SK-N-SH (cell line): ENCODE measurements at regions of chr3 and their contacts with region 1.

Region 1: GRCh38 chr3:64030741-64031140 is 7.4 kb upstream of the PSMD6 start:
- DNase-seq: peak; percentile 69
- H3K4me3 ChIP-seq: peak overlapping the region; percentile 22 to 49; a peak in 3 of 4 replicates
- H3K27ac ChIP-seq: no peak overlapping the region
- H3K4me1 ChIP-seq: peaks cover 0 to 20% of the 10 kb centered on the region in 2 experiments; a peak in 2 of 4 replicates
- H3K27me3 ChIP-seq: no peaks in the 10 kb centered on the region
- CTCF ChIP-seq: peak; percentile 88
- EP300 ChIP-seq: no peak
- RAD21 ChIP-seq: peak; percentile 98

Region 2: GRCh38 chr3:63746211-63746610 is 284.5 kb before region 1 on chr3:
- CTCF ChIA-PET with region 1: no interaction called
- POLR2A ChIA-PET with region 1: no interaction called
- DNase-seq: no peak
- H3K4me3 ChIP-seq: no peak overlapping the region
- H3K27ac ChIP-seq: no peak overlapping the region
- H3K4me1 ChIP-seq: no peaks in the 10 kb centered on the region
- H3K27me3 ChIP-seq: no peaks in the 10 kb centered on the region
- CTCF ChIP-seq: no peak
- EP300 ChIP-seq: no peak
- RAD21 ChIP-seq: no peak

Region 3: GRCh38 chr3:63863148-63864007 is 167.4 kb before region 1 on chr3 and contains the starts of genes ATXN7 and THOC7:
- CTCF ChIA-PET with region 1: no interaction called
- POLR2A ChIA-PET with region 1: no interaction called
- DNase-seq: peak; percentile 90
- H3K4me3 ChIP-seq: peak within 1 kb of the TSS; percentile 86 to 89
- H3K27ac ChIP-seq: peak within 1 kb of the TSS; percentile 69 to 78
- H3K4me1 ChIP-seq: peaks cover 6% of the 10 kb centered on the region in 2 experiments; a peak in 2 of 4 replicates
- H3K27me3 ChIP-seq: no peaks in the 10 kb centered on the region
- CTCF ChIP-seq: no peak
- EP300 ChIP-seq: peak in 1 of 2 experiments; percentile 56; a peak in 1 of 4 replicates
- RAD21 ChIP-seq: no peak
- polyA plus RNA-seq, gene ATXN7: 6.2 and 8.5 TPM in 2 replicates
- polyA plus RNA-seq, gene THOC7: 35.6 and 35.9 TPM in 2 replicates

Region 4: DNA sequence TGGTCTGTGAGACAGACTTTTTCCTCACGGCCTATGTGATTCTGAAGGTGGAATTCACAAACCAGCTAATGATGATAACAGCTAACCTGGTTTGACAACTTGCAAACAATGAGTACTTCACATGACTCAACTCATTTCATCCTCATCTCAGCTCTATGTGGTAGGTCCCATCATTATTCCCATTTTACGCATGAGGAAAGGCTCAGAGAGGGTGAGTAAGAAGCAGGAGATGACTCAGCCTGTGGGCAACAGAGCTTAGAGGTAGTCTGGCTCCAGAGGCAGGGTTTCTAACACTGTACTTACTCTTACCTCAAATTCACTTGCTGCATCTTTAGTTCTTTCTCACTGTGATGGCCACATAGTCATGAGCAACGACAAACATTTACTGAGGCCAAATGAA is 18.4 kb after region 1 on chr3:
- CTCF ChIA-PET with region 1: interaction called, 10 read pairs
- POLR2A ChIA-PET with region 1: no interaction called
- DNase-seq: no peak
- H3K4me3 ChIP-seq: no peak overlapping the region
- H3K27ac ChIP-seq: no peak overlapping the region
- H3K4me1 ChIP-seq: peaks cover 0 to 7% of the 10 kb centered on the region in 2 experiments; a peak in 2 of 4 replicates
- H3K27me3 ChIP-seq: no peaks in the 10 kb centered on the region
- CTCF ChIP-seq: no peak
- EP300 ChIP-seq: no peak
- RAD21 ChIP-seq: no peak

Region 5: GRCh38 chr3:64224826-64225610 is 194.3 kb after region 1 on chr3 and contains the start of gene PRICKLE2:
- CTCF ChIA-PET with region 1: interaction called, 12 read pairs
- POLR2A ChIA-PET with region 1: no interaction called
- DNase-seq: no peak
- H3K4me3 ChIP-seq: peak within 1 kb of the TSS; percentile 35 to 37
- H3K27ac ChIP-seq: peak within 1 kb of the TSS; percentile 47 to 61
- H3K4me1 ChIP-seq: peaks cover 16 to 23% of the 10 kb centered on the region in 2 experiments; a peak in 3 of 4 replicates
- H3K27me3 ChIP-seq: no peaks in the 10 kb centered on the region
- CTCF ChIP-seq: peak; percentile 33
- EP300 ChIP-seq: no peak
- RAD21 ChIP-seq: no peak
- polyA plus RNA-seq, gene PRICKLE2: 0.67 and 1.1 TPM in 2 replicates

Region 6: DNA sequence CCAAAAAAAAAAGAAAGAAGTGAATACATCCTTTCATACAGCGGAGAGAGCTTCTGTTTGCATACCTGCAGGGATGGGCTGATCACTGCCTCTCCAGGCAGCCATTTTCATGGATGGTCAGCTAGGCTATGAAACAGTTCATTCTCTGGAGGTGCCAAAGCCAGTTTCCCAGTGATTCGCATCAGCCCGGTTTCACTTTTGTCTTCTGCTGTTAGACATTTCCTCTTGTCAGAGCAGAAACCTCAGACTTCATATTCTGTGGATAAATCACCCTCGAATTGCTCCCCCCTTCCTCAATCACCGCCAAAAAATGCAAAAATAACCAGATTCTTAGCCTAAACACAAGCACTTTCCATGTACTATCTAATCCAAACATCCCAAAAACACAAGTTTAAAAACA is 431.5 kb after region 1 on chr3:
- CTCF ChIA-PET with region 1: interaction called, 23 read pairs
- POLR2A ChIA-PET with region 1: no interaction called
- DNase-seq: no peak
- H3K4me3 ChIP-seq: peak overlapping the region; percentile 2 to 39; a peak in 3 of 4 replicates
- H3K27ac ChIP-seq: peak overlapping the region in 1 of 2 experiments; percentile 83; a peak in 2 of 4 replicates
- H3K4me1 ChIP-seq: peaks cover 0 to 12% of the 10 kb centered on the region in 2 experiments; a peak in 1 of 4 replicates
- H3K27me3 ChIP-seq: no peaks in the 10 kb centered on the region
- CTCF ChIP-seq: no peak
- EP300 ChIP-seq: peak in 1 of 2 experiments; percentile 68; a peak in 1 of 4 replicates
- RAD21 ChIP-seq: no peak

Region 7: DNA sequence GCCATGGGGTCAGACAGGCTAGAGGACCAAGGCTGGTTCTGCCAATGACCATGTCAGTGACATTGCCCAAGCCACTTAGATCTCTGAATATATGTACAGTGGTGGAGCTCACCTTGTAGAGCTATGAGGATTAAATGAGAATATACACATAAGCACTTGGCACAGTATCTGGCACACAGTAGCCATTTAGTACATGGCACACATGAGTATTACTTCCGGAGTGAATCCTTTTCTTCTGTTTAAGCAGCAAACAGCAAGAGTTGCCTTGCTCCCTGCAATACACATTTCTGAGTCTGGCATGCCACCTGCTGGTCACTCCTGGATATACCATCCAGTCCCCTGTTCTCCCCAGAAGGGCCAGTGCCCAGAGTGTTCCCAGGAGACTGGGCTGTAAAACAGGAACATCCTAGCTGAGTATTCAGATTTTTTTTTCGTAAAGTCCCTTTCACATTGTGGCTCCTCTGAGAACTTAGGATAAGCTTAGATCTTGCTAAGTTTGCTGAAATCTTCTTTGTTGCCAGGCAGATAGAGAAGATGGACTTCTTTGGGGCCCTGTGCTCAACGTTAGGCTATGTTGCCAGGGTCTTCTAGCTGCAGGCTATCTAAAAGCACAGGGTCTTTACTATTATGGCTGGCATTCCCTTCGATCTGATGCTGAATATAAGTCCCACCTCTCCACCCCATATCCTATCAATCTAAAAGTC is 453.7 kb after region 1 on chr3:
- CTCF ChIA-PET with region 1: interaction called, 84 read pairs
- POLR2A ChIA-PET with region 1: no interaction called
- DNase-seq: peak; percentile 76
- H3K4me3 ChIP-seq: no peak overlapping the region; a peak in 1 of 4 replicates
- H3K27ac ChIP-seq: no peak overlapping the region
- H3K4me1 ChIP-seq: peaks cover 0 to 3% of the 10 kb centered on the region in 2 experiments; a peak in 1 of 4 replicates
- H3K27me3 ChIP-seq: no peaks in the 10 kb centered on the region
- CTCF ChIP-seq: peak; percentile 91
- EP300 ChIP-seq: no peak
- RAD21 ChIP-seq: peak; percentile 100